ENCODE measurements at regions of chr4 and their contacts with region 1.

Region 1: DNA sequence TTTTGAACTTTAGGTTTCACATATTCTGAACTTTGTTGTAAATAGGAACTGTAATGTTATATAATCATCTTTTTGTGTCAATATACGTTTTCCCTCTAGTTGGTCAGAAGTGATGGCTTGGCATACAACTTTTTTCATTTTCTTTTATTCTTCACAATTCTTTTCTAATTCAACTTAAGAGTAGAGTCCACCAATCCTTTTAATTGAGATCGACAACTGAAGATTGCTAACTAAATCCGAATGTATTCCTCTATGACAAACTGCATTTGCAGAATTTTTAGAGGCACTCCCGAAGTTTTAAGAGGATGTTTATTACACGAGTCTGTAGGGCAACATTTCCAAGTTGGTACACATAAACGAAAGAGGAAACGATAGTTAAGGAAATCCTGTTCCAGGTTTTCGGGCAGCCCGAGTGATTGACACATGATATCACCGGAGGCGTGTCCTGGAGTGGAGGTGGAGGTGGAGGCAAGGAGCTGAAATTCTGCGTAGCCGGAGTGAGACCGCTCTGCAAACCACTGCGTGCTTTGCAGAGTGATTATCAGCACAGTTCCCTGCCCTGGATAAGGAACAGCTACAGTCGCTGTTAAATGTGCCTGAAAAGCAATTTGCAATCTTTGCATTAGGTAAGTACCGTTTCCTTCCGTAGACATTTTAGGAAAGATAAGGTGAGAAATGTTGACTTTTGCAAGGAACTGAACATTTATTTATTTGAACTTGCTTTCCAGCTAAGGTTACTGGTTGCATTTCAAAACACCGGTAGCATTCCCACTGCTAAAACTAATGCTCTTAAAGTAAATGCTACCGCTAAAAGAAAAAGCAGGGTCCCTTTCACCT is at the start of gene SPRY1:
- DNase-seq: peak; percentile 95
- ATAC-seq: peak; percentile 84
- H3K4me3 ChIP-seq: peak within 1 kb of the TSS; percentile 83 to 96 (median 90)
- H3K27ac ChIP-seq: peak within 1 kb of the TSS; percentile 90
- H3K4me1 ChIP-seq: peaks cover 16% of the 10 kb centered on the region
- H3K27me3 ChIP-seq: no peaks in the 10 kb centered on the region; a peak in 1 of 5 replicates
- CTCF ChIP-seq: no peak; the same call in 1 of the 2 replicates
- EP300 ChIP-seq: 0 out of 4 replicates have a peak, but pooled peaks of 1 of the 2 experiments have one; percentile 16
- POLR2A ChIP-seq: peak; percentile 92 to 94
- RAD21 ChIP-seq: no peak; the same call in 1 of the 2 replicates
- total RNA-seq, gene SPRY1: 22.5 and 24.7 TPM in 2 replicates

Region 2: DNA sequence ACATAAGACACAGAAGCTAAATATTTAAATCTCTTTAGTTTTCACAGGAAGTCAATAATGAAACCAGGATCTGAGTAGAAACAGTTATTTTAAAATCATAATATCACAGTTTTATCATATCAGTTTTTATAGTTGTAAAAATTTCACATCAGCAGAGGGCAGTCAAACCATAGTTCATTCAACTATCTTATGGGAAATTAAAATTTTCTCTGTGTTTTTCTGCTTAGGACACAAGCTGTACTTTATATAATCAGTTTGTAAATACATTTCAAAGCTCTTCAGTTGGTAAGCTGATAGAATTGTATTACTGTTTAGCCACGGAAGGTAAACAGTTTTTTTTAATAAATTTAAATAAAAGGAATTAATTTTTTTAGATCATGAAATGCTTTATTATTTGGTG is 269.3 kb before region 1 on chr4:
- CTCF ChIA-PET with region 1: no interaction called
- POLR2A ChIA-PET with region 1: no interaction called
- in situ Hi-C with region 1: no loop called
- intact Hi-C with region 1: loop called (anchors 5 kb)
- DNase-seq: no peak
- ATAC-seq: no peak
- H3K4me3 ChIP-seq: no peak overlapping the region
- H3K27ac ChIP-seq: no peak overlapping the region
- H3K4me1 ChIP-seq: peaks cover 6% of the 10 kb centered on the region; the same call in 1 of the 2 replicates
- H3K27me3 ChIP-seq: no peaks in the 10 kb centered on the region
- CTCF ChIP-seq: no peak; the same call in 1 of the 2 replicates
- EP300 ChIP-seq: no peak
- POLR2A ChIP-seq: no peak
- RAD21 ChIP-seq: no peak

Region 3: DNA sequence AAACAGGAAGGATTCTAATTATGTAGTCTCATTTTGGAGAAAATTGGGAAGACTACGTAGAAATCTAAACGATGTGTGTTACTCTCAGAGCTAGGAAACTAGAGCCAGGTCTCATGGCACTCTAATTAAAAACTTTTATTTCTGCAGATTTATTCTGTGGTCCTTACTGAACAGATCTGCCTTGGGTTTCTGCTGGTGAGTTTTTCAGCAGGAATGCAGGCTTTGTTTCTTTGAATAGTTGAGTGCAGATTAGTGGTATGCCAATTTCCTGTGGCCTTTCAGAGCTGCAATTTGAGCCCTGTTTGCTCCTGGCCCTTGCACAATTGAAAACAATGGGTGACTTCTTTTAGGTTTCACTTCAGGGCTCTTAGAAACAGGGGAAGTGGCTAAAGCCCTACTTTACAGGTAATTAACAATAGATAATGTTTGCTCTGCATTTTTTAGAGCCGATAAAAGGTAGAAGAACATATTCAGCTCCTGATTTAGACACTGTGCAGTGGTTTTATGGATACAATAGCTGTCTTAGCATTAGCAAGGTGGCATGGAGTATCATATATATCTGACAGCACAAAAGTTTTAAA is 21.9 kb after region 1 on chr4:
- CTCF ChIA-PET with region 1: no interaction called
- POLR2A ChIA-PET with region 1: interaction called, 15 read pairs
- in situ Hi-C with region 1: no loop called
- intact Hi-C with region 1: no loop called
- DNase-seq: peak; percentile 97
- ATAC-seq: peak; percentile 97
- H3K4me3 ChIP-seq: peak overlapping the region in 2 of 3 experiments; percentile 6 to 30; a peak in 2 of 6 replicates
- H3K27ac ChIP-seq: peak overlapping the region; percentile 70
- H3K4me1 ChIP-seq: peaks cover 72% of the 10 kb centered on the region
- H3K27me3 ChIP-seq: no peaks in the 10 kb centered on the region
- CTCF ChIP-seq: no peak
- EP300 ChIP-seq: peak in 1 of 2 experiments; percentile 95; a peak in 2 of 4 replicates
- POLR2A ChIP-seq: no peak
- RAD21 ChIP-seq: peak; percentile 21; the same call in 1 of the 2 replicates

Region 4: DNA sequence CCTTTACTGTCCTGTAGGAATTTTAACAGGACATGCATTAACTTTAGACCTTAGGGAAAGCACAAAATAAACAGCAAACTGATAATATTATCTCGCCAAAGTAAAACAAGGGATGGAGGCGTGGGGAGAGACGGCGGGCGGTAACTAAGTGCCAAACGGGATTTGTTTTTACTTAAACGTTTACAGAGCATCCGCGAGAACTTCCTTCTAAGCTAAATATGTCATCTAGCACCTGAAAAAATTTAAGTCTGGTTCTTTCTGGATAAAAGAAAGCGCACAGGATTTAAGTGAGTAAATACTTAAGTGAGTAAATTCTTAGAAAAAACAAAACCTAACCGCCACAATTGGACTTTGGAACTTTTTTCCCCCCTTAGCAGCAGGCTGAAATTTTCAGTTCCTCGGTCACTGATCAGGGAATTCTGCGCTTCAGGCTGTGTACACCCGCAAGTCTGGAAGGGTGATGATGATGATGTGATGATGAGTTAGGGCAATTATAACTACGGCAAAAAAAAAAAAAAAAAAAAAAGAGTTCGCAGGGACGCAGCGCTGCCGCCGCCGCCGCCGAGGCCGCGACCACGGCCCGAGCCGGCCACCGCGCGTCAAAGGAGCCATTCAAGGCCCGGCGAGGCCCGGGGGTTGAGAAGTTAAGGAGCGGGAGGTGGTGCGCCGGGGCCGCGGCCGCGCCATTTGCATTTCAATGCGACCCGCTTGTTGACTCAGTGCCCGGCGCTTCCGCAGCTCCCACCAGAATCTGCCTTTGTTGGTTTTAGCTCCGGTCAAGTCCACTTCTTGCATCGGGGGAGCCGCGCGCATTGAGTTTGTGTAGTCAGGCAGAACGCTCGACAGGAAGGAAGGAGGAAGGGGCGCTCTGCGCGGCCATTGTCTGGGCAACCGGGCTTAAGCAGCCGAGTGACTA is 108.8 kb after region 1 on chr4:
- CTCF ChIA-PET with region 1: no interaction called
- POLR2A ChIA-PET with region 1: interaction called, 21 read pairs
- in situ Hi-C with region 1: no loop called
- intact Hi-C with region 1: loop called (anchors 1 kb)
- DNase-seq: peak; percentile 97
- ATAC-seq: peak; percentile 97
- H3K4me3 ChIP-seq: peak overlapping the region; percentile 43 to 65 (median 59)
- H3K27ac ChIP-seq: peak overlapping the region; percentile 97
- H3K4me1 ChIP-seq: peaks cover 48% of the 10 kb centered on the region
- H3K27me3 ChIP-seq: no peaks in the 10 kb centered on the region
- CTCF ChIP-seq: peak; percentile 43; the same call in 1 of the 2 replicates
- EP300 ChIP-seq: peak in 1 of 2 experiments; percentile 90; a peak in 2 of 4 replicates
- POLR2A ChIP-seq: peak; percentile 65 to 69; a peak in 3 of 4 replicates
- RAD21 ChIP-seq: peak; percentile 73

Region 5: GRCh38 chr4:123588631-123589241 is 192.2 kb after region 1 on chr4:
- CTCF ChIA-PET with region 1: no interaction called
- POLR2A ChIA-PET with region 1: no interaction called
- in situ Hi-C with region 1: no loop called
- intact Hi-C with region 1: loop called (anchors 1 kb)
- DNase-seq: peak; percentile 86
- ATAC-seq: peak; percentile 87
- H3K4me3 ChIP-seq: no peak overlapping the region
- H3K27ac ChIP-seq: no peak overlapping the region
- H3K4me1 ChIP-seq: peaks cover 29% of the 10 kb centered on the region
- H3K27me3 ChIP-seq: no peaks in the 10 kb centered on the region
- CTCF ChIP-seq: no peak
- EP300 ChIP-seq: no peak
- POLR2A ChIP-seq: no peak
- RAD21 ChIP-seq: no peak

Region 6: GRCh38 chr4:123661080-123661737 is 264.7 kb after region 1 on chr4:
- CTCF ChIA-PET with region 1: interaction called, 3 read pairs
- POLR2A ChIA-PET with region 1: interaction called, 4 read pairs
- in situ Hi-C with region 1: loop called (anchors 5 kb)
- intact Hi-C with region 1: loop called (anchors 1 kb)
- DNase-seq: no peak
- ATAC-seq: no peak
- H3K4me3 ChIP-seq: no peak overlapping the region
- H3K27ac ChIP-seq: no peak overlapping the region
- H3K4me1 ChIP-seq: peaks cover 30% of the 10 kb centered on the region
- H3K27me3 ChIP-seq: no peaks in the 10 kb centered on the region
- CTCF ChIP-seq: peak; percentile 36; the same call in 1 of the 2 replicates
- EP300 ChIP-seq: no peak
- POLR2A ChIP-seq: no peak
- RAD21 ChIP-seq: peak; percentile 47; the same call in 1 of the 2 replicates

Measured in HepG2 (cell line).